Right ventricle myocardium inferior (tissue), 1 donor: ENCODE measurements at regions of chr12 and their contacts with region 1.

Region 1: GRCh38 chr12:76559400-76560085 is at the start of gene OSBPL8:
- DNase-seq: peak; percentile 98
- ATAC-seq: peak; percentile 97
- total RNA-seq, gene OSBPL8: 33.1 TPM

Region 2: DNA sequence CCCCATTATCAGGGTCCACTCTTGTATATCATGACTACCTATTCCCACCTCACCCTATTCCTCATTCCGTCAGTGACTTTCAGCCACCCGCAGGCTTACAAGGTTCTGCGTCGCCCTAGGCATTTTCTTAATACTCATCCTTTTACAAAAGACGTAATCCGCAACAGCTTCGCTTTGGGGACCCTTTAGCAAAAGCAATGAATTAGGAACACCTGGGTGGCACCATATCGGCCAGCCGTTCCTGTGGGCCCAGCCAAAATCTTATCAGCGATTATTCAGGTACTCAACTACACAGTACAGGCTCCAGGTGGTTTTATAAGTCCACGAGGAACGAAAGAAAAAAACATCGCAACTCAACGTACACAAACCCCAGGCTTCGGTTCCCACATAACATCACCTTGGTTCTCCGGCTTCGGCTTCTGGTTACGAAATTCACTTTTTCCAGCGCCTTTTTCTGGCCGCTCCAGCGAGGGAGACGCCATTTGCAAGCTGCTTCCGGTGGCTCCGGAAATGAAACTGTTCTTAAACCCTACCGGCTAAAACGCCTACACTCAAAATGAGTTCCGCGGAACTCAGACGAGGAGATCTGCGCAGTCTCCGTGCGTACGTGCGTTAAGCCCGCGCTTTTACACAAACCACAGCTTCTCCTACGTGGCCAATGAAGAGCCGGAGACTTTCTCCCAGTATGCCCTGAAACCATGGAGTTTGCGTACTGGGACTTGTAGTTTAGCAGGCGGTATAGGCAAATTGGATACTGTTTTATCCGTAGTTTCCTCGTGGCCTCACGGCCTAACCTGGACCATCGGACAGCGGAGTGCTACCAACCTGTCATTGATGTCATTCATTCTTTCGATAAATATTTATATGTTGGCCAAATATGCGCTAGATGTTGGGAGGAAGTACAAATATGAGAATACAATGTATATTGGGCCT is 1048.2 kb before region 1 on chr12 and contains the start of gene KRR1:
- intact Hi-C with region 1: loop called (anchors 5 kb)
- DNase-seq: peak; percentile 92
- ATAC-seq: peak; percentile 99
- total RNA-seq, gene KRR1: 31.1 TPM

Region 3: GRCh38 chr12:76083904-76084862 is 475.4 kb before region 1 on chr12 and contains the start of gene NAP1L1:
- intact Hi-C with region 1: loop called (anchors 2 kb)
- DNase-seq: peak; percentile 99
- ATAC-seq: peak; percentile 97
- total RNA-seq, gene NAP1L1: 267 TPM

Region 4: GRCh38 chr12:76348079-76348901 is 211.3 kb before region 1 on chr12 and contains the start of gene BBS10:
- intact Hi-C with region 1: loop called (anchors 2 kb)
- DNase-seq: peak; percentile 96
- ATAC-seq: peak; percentile 98
- total RNA-seq, gene BBS10: 8.6 TPM

Region 5: GRCh38 chr12:76441016-76441415 is 118.5 kb before region 1 on chr12:
- intact Hi-C with region 1: no loop called
- DNase-seq: no peak
- ATAC-seq: no peak

Region 6: GRCh38 chr12:76464631-76465166 is 94.8 kb before region 1 on chr12:
- intact Hi-C with region 1: loop called (anchors 5 kb)
- DNase-seq: no peak
- ATAC-seq: no peak